ENCODE measurements at regions of chr12 and their contacts with region 1.

Region 1: GRCh38 chr12:110888256-110888991 is 32.0 kb downstream of the MYL2 start:
- DNase-seq: no peak
- H3K4me3 Mint-ChIP-seq: peak overlapping the region; percentile 87
- H3K27ac Mint-ChIP-seq: no peak overlapping the region
- H3K4me1 Mint-ChIP-seq: peaks cover 6% of the 10 kb centered on the region
- H3K27me3 Mint-ChIP-seq: peaks cover 15% of the 10 kb centered on the region

Region 2: DNA sequence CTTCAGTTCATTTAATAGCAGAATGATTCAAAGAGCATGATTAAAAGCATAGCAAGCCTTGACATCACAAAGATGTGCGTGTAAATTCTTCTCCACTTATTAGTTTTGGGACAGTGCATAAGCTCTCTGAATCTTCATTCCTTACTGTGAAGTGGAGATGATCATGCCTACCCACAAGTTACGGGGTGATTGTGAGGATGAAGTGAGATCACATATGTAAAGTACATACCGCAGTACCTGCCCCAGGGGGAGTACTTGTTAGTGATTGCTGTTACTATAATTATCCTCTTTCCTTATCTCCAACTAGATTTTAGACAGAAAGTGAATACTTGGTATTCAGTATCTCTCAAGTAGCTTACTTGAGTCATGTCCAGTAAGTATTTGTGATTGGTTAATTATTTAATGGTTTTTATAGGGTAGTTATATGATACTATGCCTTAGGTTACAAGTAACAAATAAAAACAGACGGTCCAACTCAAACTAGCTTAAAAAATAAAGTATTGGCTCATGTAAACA is 380.3 kb before region 1 on chr12:
- intact Hi-C with region 1: loop called (anchors 1 kb)
- DNase-seq: no peak
- H3K4me3 Mint-ChIP-seq: no peak overlapping the region
- H3K27ac Mint-ChIP-seq: no peak overlapping the region
- H3K4me1 Mint-ChIP-seq: no peaks in the 10 kb centered on the region
- H3K27me3 Mint-ChIP-seq: peaks cover 7% of the 10 kb centered on the region

Region 3: DNA sequence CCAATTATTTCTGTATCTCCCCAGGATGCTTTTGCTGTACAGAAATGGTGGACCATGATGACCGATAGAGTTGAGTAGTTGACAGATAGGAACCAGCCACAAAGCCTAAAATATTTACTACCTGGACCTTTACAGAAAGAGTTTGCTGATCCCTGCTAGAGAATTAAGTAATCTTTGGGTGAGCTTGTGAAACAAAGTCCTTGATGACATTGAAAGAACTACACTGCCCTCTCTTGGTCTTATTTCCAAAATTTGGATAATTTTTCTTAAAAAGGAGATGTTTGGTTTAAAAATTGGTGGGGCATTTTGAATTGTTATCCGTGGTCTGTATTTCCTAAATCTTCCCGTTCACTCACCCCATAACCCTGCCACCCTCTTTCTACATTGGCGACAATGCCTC is 288.2 kb before region 1 on chr12:
- intact Hi-C with region 1: loop called (anchors 1 kb)
- DNase-seq: peak; percentile 67
- H3K4me3 Mint-ChIP-seq: no peak overlapping the region
- H3K27ac Mint-ChIP-seq: no peak overlapping the region
- H3K4me1 Mint-ChIP-seq: peaks cover 13% of the 10 kb centered on the region
- H3K27me3 Mint-ChIP-seq: no peaks in the 10 kb centered on the region

Region 4: GRCh38 chr12:110742718-110743570 is 145.5 kb before region 1 on chr12 and contains the start of gene PPP1CC:
- intact Hi-C with region 1: loop called (anchors 2 kb)
- DNase-seq: peak; percentile 97
- H3K4me3 Mint-ChIP-seq: peak within 1 kb of the TSS; percentile 99
- H3K27ac Mint-ChIP-seq: peak within 1 kb of the TSS; percentile 99
- H3K4me1 Mint-ChIP-seq: peaks cover 35% of the 10 kb centered on the region
- H3K27me3 Mint-ChIP-seq: no peaks in the 10 kb centered on the region
- total RNA-seq, gene PPP1CC: 459 and 489 TPM in 2 replicates

Region 5: GRCh38 chr12:110826592-110827200 is 61.7 kb before region 1 on chr12:
- intact Hi-C with region 1: loop called (anchors 1 kb)
- DNase-seq: peak; percentile 96
- H3K4me3 Mint-ChIP-seq: peak overlapping the region; percentile 43
- H3K27ac Mint-ChIP-seq: peak overlapping the region; percentile 46
- H3K4me1 Mint-ChIP-seq: peaks cover 16% of the 10 kb centered on the region
- H3K27me3 Mint-ChIP-seq: peaks cover 10% of the 10 kb centered on the region

Region 6: DNA sequence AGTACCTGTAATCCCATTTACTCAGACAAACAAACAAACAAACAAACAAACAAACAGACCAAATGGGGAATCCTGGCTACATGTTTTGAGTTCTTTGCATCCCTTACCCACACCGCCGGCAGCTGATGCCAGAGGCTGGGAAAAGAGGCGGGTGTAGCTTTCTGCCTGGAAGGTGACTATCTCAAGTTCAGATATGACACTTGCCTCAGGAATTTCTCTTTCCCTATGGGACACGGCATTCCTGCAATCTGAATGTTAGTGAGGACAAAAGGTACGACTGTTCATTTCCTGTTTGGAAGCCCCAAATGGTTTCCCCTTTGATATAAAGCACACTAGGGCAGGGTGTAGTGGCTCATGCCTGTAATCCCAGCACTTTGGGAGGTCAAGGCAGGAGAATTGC is 29.0 kb after region 1 on chr12:
- intact Hi-C with region 1: no loop called
- DNase-seq: no peak
- H3K4me3 Mint-ChIP-seq: no peak overlapping the region
- H3K27ac Mint-ChIP-seq: no peak overlapping the region
- H3K4me1 Mint-ChIP-seq: no peaks in the 10 kb centered on the region
- H3K27me3 Mint-ChIP-seq: peaks cover 5% of the 10 kb centered on the region

Region 7: GRCh38 chr12:111313833-111314259 is 425.4 kb after region 1 on chr12:
- intact Hi-C with region 1: loop called (anchors 5 kb)
- DNase-seq: peak; percentile 89
- H3K4me3 Mint-ChIP-seq: no peak overlapping the region
- H3K27ac Mint-ChIP-seq: no peak overlapping the region
- H3K4me1 Mint-ChIP-seq: peaks cover 7% of the 10 kb centered on the region
- H3K27me3 Mint-ChIP-seq: peaks cover 6% of the 10 kb centered on the region